ENCODE measurements at regions of chr12 and their contacts with region 1.

Region 1: GRCh38 chr12:57735952-57736740 is 2.4 kb downstream of the AGAP2 start:
- DNase-seq: peak; percentile 54 to 72 (median 61)
- ATAC-seq: peak; percentile 5 to 61 (median 34)
- H3K4me3 ChIP-seq: peak overlapping the region; percentile 14 to 58 (median 46)
- H3K27ac ChIP-seq: peak overlapping the region in 7 of 12 donors; percentile 0 to 77 (median 65)
- H3K4me1 ChIP-seq: peaks cover 5 to 50% (median 31%) of the 10 kb centered on the region in 12 donors
- H3K27me3 ChIP-seq: peaks cover 25 to 76% (median 39%) of the 10 kb centered on the region in 9 donors
- CTCF ChIP-seq: peak in 6 of 12 donors; percentile 10 to 44 (median 30)
- POLR2A ChIP-seq: no peak

Region 2: GRCh38 chr12:57632694-57633477 is 103.3 kb before region 1 on chr12 and contains the start of gene B4GALNT1:
- intact Hi-C with region 1: loop called in 1 of 10 experiments (anchors 10 kb)
- DNase-seq: peak in 4 of 5 donors; percentile 46 to 79 (median 66)
- ATAC-seq: peak in 3 of 4 donors; percentile 84 to 94 (median 84)
- H3K4me3 ChIP-seq: peak within 1 kb of the TSS; percentile 46 to 71 (median 64)
- H3K27ac ChIP-seq: peak within 1 kb of the TSS in 4 of 12 donors; percentile 17 to 57 (median 44)
- H3K4me1 ChIP-seq: peaks cover 0 to 24% (median 11%) of the 10 kb centered on the region in 12 donors
- H3K27me3 ChIP-seq: peaks cover 0 to 74% (median 24%) of the 10 kb centered on the region in 9 donors
- CTCF ChIP-seq: peak; percentile 77 to 94 (median 88)
- POLR2A ChIP-seq: no peak
- total RNA-seq, gene B4GALNT1: 1.9 to 8.8 (median 5.9) TPM

Region 3: GRCh38 chr12:57803319-57803893 is 67.3 kb after region 1 on chr12:
- intact Hi-C with region 1: no loop called
- DNase-seq: peak in 4 of 5 donors; percentile 43 to 62 (median 50)
- ATAC-seq: peak; percentile 68 to 87 (median 82)
- H3K4me3 ChIP-seq: no peak overlapping the region
- H3K27ac ChIP-seq: peak overlapping the region in 3 of 12 donors; percentile 15 to 20 (median 15)
- H3K4me1 ChIP-seq: peaks cover 0 to 10% (median 2%) of the 10 kb centered on the region in 12 donors
- H3K27me3 ChIP-seq: no peaks in the 10 kb centered on the region
- CTCF ChIP-seq: peak; percentile 63 to 89 (median 82)
- POLR2A ChIP-seq: no peak

Measured in heart left ventricle (tissue), 16 donors.